Psoas muscle (tissue), 8 donors: ENCODE measurements at regions of chr5 and their contacts with region 1.

Region 1: GRCh38 chr5:42767491-42768105 is 11.0 kb downstream of the CCDC152 start:
- DNase-seq: no peak
- ATAC-seq: peak in 1 of 4 donors; percentile 74
- H3K4me3 ChIP-seq: no peak overlapping the region
- H3K27ac ChIP-seq: no peak overlapping the region
- H3K4me1 ChIP-seq: no peaks in the 10 kb centered on the region
- H3K27me3 ChIP-seq: no peaks in the 10 kb centered on the region
- CTCF ChIP-seq: peak; percentile 67

Region 2: DNA sequence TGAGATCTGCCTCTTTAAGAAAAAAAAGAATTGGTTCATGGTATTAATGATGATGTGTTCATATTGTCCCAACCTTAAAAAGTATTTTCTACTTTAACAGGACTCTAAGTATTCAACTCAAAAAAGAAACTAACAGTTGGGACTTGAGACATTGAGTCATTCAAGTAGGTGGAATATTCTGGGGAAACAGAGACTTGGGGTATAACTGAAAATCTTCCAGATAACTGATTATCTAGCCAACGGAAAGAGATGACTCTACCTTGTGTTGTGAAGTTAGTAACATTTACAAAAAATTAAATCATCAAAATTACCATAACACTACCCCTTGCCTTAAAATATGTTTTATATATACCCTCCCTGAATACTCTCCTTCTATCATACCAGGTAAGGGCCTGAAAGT is 916.5 kb before region 1 on chr5:
- intact Hi-C with region 1: loop called (anchors 5 kb)
- DNase-seq: no peak
- ATAC-seq: no peak
- H3K4me3 ChIP-seq: no peak overlapping the region
- H3K27ac ChIP-seq: no peak overlapping the region
- H3K4me1 ChIP-seq: no peaks in the 10 kb centered on the region
- H3K27me3 ChIP-seq: no peaks in the 10 kb centered on the region
- CTCF ChIP-seq: no peak

Region 3: GRCh38 chr5:41856644-41857491 is 910.7 kb before region 1 on chr5:
- intact Hi-C with region 1: loop called (anchors 5 kb)
- DNase-seq: no peak
- ATAC-seq: peak; percentile 75 to 94 (median 82)
- H3K4me3 ChIP-seq: no peak overlapping the region
- H3K27ac ChIP-seq: no peak overlapping the region
- H3K4me1 ChIP-seq: no peaks in the 10 kb centered on the region
- H3K27me3 ChIP-seq: no peaks in the 10 kb centered on the region
- CTCF ChIP-seq: peak; percentile 85

Region 4: DNA sequence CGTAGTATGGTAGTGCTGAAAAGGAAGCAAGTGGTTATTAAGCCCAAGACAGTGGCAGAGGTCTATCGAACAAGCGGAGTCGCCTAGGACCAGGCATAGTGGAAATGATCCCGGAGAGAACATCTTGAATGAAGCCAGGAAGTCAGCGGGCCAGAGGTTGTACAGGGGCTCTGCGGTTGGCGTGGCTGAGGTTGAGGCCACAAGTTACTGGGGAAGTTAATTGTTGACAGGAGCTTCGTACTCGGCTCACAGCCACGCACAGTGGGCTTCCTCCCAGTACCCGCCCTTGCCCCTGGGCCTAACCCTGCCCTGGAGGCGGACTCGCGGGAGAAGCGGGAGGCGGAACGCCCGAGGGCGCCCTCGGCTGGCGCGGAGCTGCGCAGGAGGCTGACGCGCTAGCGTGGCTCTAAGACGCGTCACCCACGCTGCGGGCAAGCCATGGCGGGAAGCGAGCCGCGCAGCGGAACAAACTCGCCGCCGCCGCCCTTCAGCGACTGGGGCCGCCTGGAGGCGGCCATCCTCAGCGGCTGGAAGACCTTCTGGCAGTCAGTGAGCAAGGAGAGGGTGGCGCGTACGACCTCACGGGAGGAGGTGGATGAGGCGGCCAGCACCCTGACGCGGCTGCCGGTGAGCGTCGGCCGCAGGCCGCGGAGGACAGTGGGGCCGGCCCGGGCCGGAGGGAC is 842.6 kb before region 1 on chr5 and contains the start of gene FBXO4:
- intact Hi-C with region 1: loop called in 1 of 2 experiments (anchors 10 kb)
- DNase-seq: peak; percentile 89 to 94
- ATAC-seq: peak; percentile 97 to 99 (median 99)
- H3K4me3 ChIP-seq: peak within 1 kb of the TSS; percentile 80
- H3K27ac ChIP-seq: peak within 1 kb of the TSS; percentile 93
- H3K4me1 ChIP-seq: peaks cover 16% of the 10 kb centered on the region
- H3K27me3 ChIP-seq: no peaks in the 10 kb centered on the region
- CTCF ChIP-seq: peak; percentile 59
- total RNA-seq, gene FBXO4: 2.6 to 4.3 (median 3.1) TPM

Region 5: DNA sequence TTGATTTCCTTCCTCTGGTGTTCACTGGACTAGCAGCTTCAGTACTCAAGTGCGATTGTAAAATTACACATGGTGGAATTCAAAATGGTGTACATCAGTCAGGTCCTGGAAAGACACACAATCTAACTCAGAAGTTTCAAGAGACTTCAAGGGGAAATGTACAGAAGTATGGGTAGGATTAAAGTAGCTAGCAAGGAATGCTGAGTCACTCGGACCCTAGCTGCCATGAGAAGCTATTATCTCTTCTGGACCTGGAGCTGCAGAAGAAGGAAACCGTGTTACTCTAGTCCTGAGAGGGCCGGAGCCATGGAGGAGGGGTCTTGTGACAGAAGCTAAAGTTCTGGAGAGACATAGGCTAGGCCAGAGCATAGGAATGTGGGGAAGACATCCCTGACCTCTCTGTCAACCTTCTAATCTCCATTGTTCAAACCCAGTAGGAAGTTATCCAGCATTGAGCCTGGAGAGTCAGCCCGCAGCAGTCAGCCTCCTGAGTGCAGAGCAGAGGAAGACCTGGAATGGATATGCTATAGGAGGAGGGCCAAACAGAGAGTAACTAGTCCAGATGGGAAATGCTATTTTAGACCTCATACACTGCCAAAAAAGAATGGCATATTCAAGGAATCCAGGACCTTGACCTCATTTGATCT is 260.0 kb before region 1 on chr5:
- intact Hi-C with region 1: loop called in 1 of 2 experiments (anchors 10 kb)
- DNase-seq: peak in 1 of 2 donors; percentile 35
- ATAC-seq: peak; percentile 34 to 54 (median 50)
- H3K4me3 ChIP-seq: no peak overlapping the region
- H3K27ac ChIP-seq: peak overlapping the region; percentile 59
- H3K4me1 ChIP-seq: peaks cover 69% of the 10 kb centered on the region
- H3K27me3 ChIP-seq: no peaks in the 10 kb centered on the region
- CTCF ChIP-seq: no peak

Region 6: DNA sequence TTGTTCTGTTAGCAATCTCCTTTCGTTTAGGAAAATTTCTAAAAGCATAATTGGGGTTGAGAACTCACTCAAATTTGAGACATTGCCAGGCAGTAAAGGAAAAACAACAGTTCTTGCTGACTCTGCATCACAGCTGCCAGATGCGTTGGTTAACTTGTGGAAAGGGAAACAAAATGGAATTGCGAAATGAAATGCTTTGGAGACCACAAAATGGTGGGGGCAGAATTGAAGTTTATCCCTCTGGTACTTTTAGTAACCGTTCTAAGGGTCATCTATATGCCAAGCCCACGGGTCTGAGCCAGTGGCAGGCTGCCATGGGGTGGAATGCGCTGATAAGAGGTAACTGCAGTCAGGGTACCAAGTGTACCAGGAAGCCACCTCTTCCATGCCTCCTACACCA is 72.7 kb after region 1 on chr5:
- intact Hi-C with region 1: no loop called
- DNase-seq: peak; percentile 49 to 66
- ATAC-seq: peak in 3 of 4 donors; percentile 13 to 60 (median 31)
- H3K4me3 ChIP-seq: no peak overlapping the region
- H3K27ac ChIP-seq: peak overlapping the region; percentile 30
- H3K4me1 ChIP-seq: peaks cover 12% of the 10 kb centered on the region
- H3K27me3 ChIP-seq: no peaks in the 10 kb centered on the region
- CTCF ChIP-seq: no peak

Region 7: GRCh38 chr5:42889311-42889933 is 121.8 kb after region 1 on chr5:
- intact Hi-C with region 1: loop called in 1 of 2 experiments (anchors 5 kb)
- DNase-seq: peak; percentile 68 to 77
- ATAC-seq: peak; percentile 86 to 99 (median 94)
- H3K4me3 ChIP-seq: no peak overlapping the region
- H3K27ac ChIP-seq: no peak overlapping the region
- H3K4me1 ChIP-seq: no peaks in the 10 kb centered on the region
- H3K27me3 ChIP-seq: no peaks in the 10 kb centered on the region
- CTCF ChIP-seq: peak; percentile 92

Region 8: GRCh38 chr5:42940853-42941252 is 173.3 kb after region 1 on chr5:
- intact Hi-C with region 1: no loop called
- DNase-seq: no peak
- ATAC-seq: no peak
- H3K4me3 ChIP-seq: no peak overlapping the region
- H3K27ac ChIP-seq: no peak overlapping the region
- H3K4me1 ChIP-seq: no peaks in the 10 kb centered on the region
- H3K27me3 ChIP-seq: peaks cover 4 to 45% (median 11%) of the 10 kb centered on the region in 3 donors
- CTCF ChIP-seq: no peak